Caco-2 (cell line): ENCODE measurements at regions of chr11 and their contacts with region 1.

Region 1: DNA sequence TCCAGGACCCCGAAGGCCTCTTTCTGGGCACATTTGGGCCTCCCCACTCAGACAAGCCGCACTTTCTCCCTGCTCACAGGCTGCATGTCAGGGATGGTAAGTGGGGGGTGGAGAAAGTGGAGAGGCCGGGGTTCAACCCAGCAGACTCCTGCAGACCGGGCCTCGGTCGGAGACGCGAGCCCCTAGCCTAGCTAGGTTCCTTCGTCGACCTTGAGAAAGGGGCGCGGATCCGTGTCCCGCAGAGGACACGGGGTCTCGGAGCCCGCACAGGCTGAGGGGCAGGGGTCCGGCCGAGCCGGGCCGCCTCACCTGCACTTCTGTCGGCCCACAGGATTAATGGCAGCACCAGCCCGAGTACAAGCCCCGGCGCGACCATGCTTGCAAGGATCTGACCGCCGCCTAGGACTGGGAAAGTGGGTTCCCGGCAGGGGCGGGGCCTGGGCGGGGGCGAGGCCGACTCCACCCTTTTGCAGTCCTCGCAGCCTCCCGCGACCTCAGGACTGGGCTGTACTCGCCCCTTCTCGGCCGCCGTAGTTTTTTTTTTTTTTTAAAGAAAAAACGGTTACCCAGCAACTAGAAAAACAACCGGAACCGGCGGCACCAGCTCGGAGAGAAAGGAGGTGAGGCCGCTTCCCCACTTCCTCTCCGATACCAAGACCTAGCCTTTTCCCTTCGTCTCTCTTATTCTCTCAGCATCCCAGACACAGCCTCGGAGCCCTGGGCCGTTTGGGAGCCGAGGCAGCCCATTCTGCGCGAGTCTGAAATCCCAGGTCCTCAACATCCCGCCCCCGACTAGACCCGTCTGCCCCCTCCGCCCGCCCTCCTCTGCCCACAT is at the starts of genes SIAE and SPA17:
- DNase-seq: peak; percentile 98 to 99
- H3K4me3 ChIP-seq: peak within 1 kb of the TSS; percentile 55
- H3K4me3 Mint-ChIP-seq: peak within 1 kb of the TSS; percentile 90
- H3K27ac Mint-ChIP-seq: peak within 1 kb of the TSS; percentile 95
- H3K4me1 ChIP-seq: peaks cover 19% of the 10 kb centered on the region
- H3K4me1 Mint-ChIP-seq: no peaks in the 10 kb centered on the region
- H3K27me3 ChIP-seq: no peaks in the 10 kb centered on the region
- H3K27me3 Mint-ChIP-seq: no peaks in the 10 kb centered on the region
- CTCF ChIP-seq: no peak
- total RNA-seq, gene SIAE: 33.7 and 34.1 TPM in 2 replicates
- total RNA-seq, gene SPA17: 3.7 and 4.2 TPM in 2 replicates

Region 2: DNA sequence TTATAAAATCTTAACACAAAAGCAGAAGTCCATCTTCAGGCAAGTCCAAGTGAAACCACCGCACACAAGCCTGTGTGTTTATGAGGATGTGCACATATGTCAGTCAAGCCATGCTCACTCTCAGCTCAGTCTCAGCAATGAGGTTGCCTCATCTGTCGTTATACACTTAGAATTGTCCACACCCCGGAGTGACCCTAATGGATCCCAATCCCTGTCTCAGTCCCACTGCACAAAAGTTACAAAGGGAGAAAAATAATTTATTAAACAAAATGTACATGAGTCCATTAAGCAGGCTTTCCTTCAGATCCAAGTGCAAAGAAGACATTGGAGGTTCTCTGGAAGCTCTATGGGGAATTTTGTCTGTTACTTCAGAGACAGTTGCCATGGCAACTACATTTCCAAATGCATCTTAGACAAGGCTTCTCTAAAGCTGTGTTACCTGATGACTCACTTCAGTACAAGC is 154.5 kb before region 1 on chr11:
- CTCF ChIA-PET with region 1: no interaction called
- POLR2A ChIA-PET with region 1: no interaction called
- intact Hi-C with region 1: no loop called
- DNase-seq: no peak
- H3K4me3 ChIP-seq: no peak overlapping the region
- H3K4me3 Mint-ChIP-seq: no peak overlapping the region
- H3K27ac Mint-ChIP-seq: no peak overlapping the region
- H3K4me1 ChIP-seq: no peaks in the 10 kb centered on the region
- H3K4me1 Mint-ChIP-seq: no peaks in the 10 kb centered on the region
- H3K27me3 ChIP-seq: peaks cover 2% of the 10 kb centered on the region
- H3K27me3 Mint-ChIP-seq: peaks cover 28% of the 10 kb centered on the region
- CTCF ChIP-seq: no peak

Region 3: DNA sequence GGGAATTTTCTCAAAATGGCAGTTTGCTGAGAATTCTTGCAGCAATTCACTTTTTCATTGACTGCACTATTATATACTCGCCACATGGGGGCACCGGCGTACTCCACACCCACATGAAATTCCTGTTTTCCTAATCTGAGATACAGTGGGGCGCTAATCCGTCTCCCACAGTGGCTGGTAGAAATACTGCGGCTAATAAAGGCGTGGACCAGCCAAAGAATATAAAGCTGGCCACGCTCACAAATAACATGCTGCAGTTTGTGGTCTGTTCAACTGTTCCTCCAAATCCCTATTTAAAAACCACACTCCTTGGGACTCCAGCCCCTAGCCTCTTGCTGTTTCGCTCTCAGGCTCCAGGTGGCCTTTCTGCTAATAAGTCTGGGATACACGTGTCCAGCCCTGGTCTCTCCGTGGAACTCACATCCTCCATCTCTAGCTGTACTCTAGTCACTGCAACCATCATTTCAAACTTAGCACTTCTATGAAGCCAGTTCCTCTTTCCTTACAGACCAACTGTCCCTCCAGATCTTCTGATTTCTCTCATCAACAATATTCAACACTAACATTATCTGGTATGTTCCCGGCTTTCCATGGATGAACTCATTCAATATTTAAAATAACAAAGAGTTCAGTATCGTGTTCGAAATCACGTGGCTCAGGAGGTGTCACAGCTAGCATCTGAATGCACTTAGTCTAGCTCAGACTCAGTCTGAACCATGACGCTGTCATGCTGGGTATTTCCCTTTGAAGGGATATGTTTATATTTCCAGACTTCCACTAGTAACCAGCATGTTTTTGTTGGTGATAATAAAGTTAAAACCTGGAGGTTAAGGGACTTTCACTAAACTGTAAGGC is 28.9 kb before region 1 on chr11:
- CTCF ChIA-PET with region 1: interaction called, 4 read pairs
- POLR2A ChIA-PET with region 1: no interaction called
- intact Hi-C with region 1: loop called (anchors 1 kb)
- DNase-seq: peak; percentile 77 to 79
- H3K4me3 ChIP-seq: 0 out of 2 replicates have a peak overlapping the region, but pooled peaks have one; percentile 1
- H3K4me3 Mint-ChIP-seq: peak overlapping the region; percentile 54
- H3K27ac Mint-ChIP-seq: no peak overlapping the region
- H3K4me1 ChIP-seq: no peaks in the 10 kb centered on the region
- H3K4me1 Mint-ChIP-seq: no peaks in the 10 kb centered on the region
- H3K27me3 ChIP-seq: no peaks in the 10 kb centered on the region
- H3K27me3 Mint-ChIP-seq: no peaks in the 10 kb centered on the region
- CTCF ChIP-seq: peak; percentile 92 to 99

Region 4: DNA sequence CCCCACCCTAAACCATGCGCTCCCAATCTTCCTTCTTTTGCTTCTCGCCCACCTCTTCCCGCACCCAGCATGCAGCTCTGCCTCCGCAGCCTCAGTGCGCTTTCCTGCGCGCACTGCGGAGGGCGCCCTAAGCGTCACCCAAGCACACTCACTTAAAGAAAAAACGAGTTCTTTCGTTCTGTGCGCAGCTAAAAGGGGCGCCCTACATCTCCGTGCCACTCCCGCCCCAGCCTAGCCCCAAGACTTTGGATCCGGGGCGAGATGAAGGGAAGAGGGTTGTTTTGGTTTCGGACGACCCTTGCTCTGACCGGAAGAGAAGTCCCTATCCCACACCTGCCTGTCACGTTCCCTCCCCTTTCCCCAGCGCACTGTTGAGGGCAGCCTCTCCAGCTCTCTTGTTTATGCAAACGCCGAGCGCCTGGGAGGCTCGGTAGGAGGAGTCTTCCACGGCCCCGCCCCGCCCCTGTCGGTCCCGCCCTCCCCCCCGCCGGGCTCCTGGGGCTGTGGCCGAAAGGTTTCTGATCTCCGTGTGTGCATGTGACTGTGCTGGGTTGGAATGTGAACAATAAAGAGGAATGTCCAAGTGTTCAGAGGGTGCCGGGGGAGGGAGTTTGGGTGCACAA is 73.2 kb after region 1 on chr11:
- CTCF ChIA-PET with region 1: interaction called, 26 read pairs
- POLR2A ChIA-PET with region 1: interaction called, 14 read pairs
- intact Hi-C with region 1: loop called (anchors 1 kb)
- DNase-seq: peak; percentile 94 to 98
- H3K4me3 ChIP-seq: peak overlapping the region; percentile 57
- H3K4me3 Mint-ChIP-seq: peak overlapping the region; percentile 84
- H3K27ac Mint-ChIP-seq: peak overlapping the region; percentile 60
- H3K4me1 ChIP-seq: peaks cover 25% of the 10 kb centered on the region
- H3K4me1 Mint-ChIP-seq: peaks cover 17% of the 10 kb centered on the region
- H3K27me3 ChIP-seq: peaks cover under 1% of the 10 kb centered on the region; the same call in 1 of the 2 replicates
- H3K27me3 Mint-ChIP-seq: peaks cover 7% of the 10 kb centered on the region
- CTCF ChIP-seq: peak; percentile 75 to 94

Region 5: GRCh38 chr11:124793466-124794278 is 120.1 kb after region 1 on chr11:
- CTCF ChIA-PET with region 1: interaction called, 26 read pairs
- POLR2A ChIA-PET with region 1: interaction called, 10 read pairs
- intact Hi-C with region 1: loop called (anchors 1 kb)
- DNase-seq: peak in 1 of 2 experiments; percentile 79
- H3K4me3 ChIP-seq: no peak overlapping the region
- H3K4me3 Mint-ChIP-seq: no peak overlapping the region
- H3K27ac Mint-ChIP-seq: no peak overlapping the region
- H3K4me1 ChIP-seq: peaks cover 5% of the 10 kb centered on the region; the same call in 1 of the 2 replicates
- H3K4me1 Mint-ChIP-seq: peaks cover 24% of the 10 kb centered on the region
- H3K27me3 ChIP-seq: no peaks in the 10 kb centered on the region
- H3K27me3 Mint-ChIP-seq: no peaks in the 10 kb centered on the region
- CTCF ChIP-seq: peak; percentile 85 to 94

Region 6: GRCh38 chr11:124865921-124866583 is 192.5 kb after region 1 on chr11:
- CTCF ChIA-PET with region 1: interaction called, 7 read pairs
- POLR2A ChIA-PET with region 1: no interaction called
- intact Hi-C with region 1: loop called (anchors 1 kb)
- DNase-seq: peak; percentile 58 to 83
- H3K4me3 ChIP-seq: peak overlapping the region; percentile 19
- H3K4me3 Mint-ChIP-seq: peak overlapping the region; percentile 32
- H3K27ac Mint-ChIP-seq: no peak overlapping the region
- H3K4me1 ChIP-seq: peaks cover 22% of the 10 kb centered on the region
- H3K4me1 Mint-ChIP-seq: peaks cover 7% of the 10 kb centered on the region
- H3K27me3 ChIP-seq: peaks cover 16% of the 10 kb centered on the region
- H3K27me3 Mint-ChIP-seq: peaks cover 48% of the 10 kb centered on the region
- CTCF ChIP-seq: peak; percentile 91 to 98

Region 7: DNA sequence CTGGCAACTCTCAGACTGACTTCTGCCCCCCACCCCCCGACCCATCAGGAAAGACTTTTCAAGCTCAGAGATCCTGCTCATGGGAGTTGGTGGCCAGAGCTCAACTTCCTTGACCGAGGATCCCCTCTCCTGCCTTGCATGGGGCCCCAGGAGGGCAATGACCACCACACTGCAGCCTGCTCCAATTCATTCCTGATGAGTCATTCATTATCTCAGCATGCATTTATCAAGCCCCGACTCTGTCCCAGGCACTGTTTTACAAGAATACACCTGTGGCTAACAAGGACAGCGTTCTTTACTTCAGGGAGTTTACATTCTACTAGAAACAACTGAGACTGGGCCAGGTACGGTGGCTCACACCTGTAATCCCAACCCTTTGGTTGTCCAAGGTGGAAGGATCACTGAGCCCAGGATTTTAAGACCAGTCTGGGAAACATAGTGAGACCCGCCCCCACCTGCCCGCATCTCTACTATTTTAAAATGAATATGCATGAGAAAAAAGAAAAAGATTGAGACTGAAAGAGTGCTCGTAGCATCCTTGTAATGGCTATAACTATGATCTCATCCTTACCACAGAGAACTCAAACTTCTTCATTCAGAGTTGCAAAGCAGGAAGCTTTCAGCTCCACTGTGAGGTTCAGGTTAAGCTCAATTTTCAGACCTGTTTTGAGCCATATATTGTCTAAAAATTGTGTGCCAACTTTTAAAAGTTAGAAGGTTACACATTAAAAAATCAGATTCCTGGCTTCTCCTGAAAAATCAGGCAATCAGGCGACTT is 762.1 kb after region 1 on chr11:
- CTCF ChIA-PET with region 1: no interaction called
- POLR2A ChIA-PET with region 1: interaction called, 10 read pairs
- intact Hi-C with region 1: no loop called
- DNase-seq: no peak
- H3K4me3 ChIP-seq: no peak overlapping the region
- H3K4me3 Mint-ChIP-seq: no peak overlapping the region
- H3K27ac Mint-ChIP-seq: no peak overlapping the region
- H3K4me1 ChIP-seq: 0 out of 2 replicates have a peak, but pooled peaks cover 7% of the 10 kb centered on the region
- H3K4me1 Mint-ChIP-seq: no peaks in the 10 kb centered on the region
- H3K27me3 ChIP-seq: no peaks in the 10 kb centered on the region
- H3K27me3 Mint-ChIP-seq: peaks cover 26% of the 10 kb centered on the region
- CTCF ChIP-seq: no peak